HEK293 (cell line): ENCODE measurements at regions of chr10 and their contacts with region 1.

Region 1: DNA sequence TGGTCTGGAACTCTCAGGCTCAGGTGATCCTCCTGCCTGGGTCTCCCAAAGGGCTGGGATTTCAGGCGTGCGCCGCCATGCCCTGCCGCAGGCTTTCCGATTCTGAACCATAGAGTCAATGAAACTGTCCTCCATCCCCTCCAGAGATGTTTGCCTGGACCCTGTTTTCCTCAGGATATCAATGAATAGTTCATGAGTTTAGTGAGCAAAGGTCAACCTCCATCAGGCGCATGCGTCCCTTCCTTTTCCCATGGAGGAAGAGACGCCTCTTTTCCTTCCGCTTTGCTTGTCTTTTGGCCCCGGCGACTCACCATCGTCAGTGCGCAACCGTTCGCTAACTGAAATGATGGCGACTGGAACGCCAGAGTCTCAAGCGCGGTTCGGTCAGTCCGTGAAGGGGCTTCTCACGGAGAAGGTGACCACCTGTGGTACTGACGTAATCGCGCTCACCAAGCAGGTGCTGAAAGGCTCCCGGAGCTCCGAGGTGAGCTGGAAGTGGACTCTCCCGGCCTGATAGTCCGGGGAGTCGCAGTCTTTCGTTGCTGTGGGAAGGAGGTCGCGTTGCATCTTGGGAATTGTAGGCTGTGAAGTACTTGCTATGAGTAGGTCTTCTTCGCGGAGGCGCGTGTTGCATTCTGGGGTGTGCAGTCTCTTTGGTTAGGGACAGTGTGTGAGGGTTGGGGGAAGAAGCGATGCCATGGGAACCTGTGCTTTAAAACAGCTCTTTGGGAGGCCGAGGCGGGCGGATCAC is at the start of gene BORCS7:
- H3K4me3 ChIP-seq: peak within 1 kb of the TSS; percentile 70
- H3K27ac ChIP-seq: peak within 1 kb of the TSS; percentile 88
- H3K4me1 ChIP-seq: peaks cover 6% of the 10 kb centered on the region
- CTCF ChIP-seq: no peak

Region 2: DNA sequence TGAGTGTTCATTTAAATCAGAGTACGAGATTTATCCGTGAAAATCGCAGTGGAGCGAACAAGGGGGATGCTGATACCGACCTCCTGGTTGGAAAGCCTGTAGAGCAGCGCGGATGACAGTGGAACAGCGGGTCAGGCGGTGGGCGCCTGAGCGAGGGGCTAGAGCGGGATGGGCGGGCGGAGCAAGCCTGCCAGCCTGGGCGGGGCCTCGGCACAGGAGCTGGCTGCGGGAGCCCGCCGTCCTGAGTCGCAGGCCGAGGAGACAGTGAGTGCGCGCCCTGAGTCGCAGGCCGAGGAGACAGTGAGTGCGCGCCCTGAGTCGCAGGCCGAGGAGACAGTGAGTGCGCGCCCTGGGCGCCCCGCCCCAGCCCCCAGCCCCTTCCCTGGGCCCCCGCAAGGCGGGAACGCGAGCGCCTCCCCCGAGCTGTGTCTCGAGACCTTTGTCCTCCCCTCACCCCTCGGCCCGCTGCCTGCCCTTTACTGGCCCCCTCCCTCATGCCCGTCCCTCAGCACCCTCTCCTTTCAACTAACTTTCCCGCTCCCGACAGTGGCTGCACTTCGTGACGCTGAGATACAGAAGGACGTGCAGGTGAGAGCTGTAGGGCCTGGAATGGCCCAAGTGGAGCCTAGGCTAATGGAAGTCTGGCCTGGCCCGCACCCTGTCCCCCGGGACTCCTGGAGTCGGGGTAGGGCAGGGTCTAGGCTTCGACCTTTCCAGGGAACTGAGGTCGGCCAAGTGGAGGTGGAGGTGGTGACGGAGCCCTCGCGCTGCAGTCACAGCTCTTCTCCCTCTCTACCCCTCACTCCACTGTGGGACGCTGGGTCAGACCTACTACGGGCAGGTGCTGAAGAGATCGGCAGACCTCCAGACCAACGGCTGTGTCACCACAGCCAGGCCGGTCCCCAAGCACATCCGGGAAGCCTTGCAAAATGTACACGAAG is 15.4 kb after region 1 on chr10 and contains the start of gene AS3MT:
- CTCF ChIA-PET with region 1: no interaction called
- POLR2A ChIA-PET with region 1: interaction called, 19 read pairs
- H3K4me3 ChIP-seq: peak within 1 kb of the TSS; percentile 49
- H3K27ac ChIP-seq: 0 out of 2 replicates have a peak within 1 kb of the TSS, but pooled peaks have one; percentile 31
- H3K4me1 ChIP-seq: peaks cover 3% of the 10 kb centered on the region
- CTCF ChIP-seq: no peak